Dorsolateral prefrontal cortex (tissue), 120 donors: ENCODE measurements at regions of chr9 and their contacts with region 1.

Region 1: GRCh38 chr9:34994260-34994899 is 4.8 kb downstream of the DNAJB5 start:
- DNase-seq: peak in 4 of 10 donors; percentile 49 to 67 (median 60)
- H3K4me3 ChIP-seq: peak overlapping the region in 10 of 59 donors; percentile 1 to 33 (median 8)
- H3K27ac ChIP-seq: peak overlapping the region in 58 of 59 donors; percentile 15 to 96 (median 82)
- H3K27me3 ChIP-seq: no peaks in the 10 kb centered on the region
- CTCF ChIP-seq: peak; percentile 8 to 75 (median 60)

Region 2: GRCh38 chr9:34701769-34702736 is 292.3 kb before region 1 on chr9:
- intact Hi-C with region 1: loop called in 1 of 2 experiments (anchors 5 kb)
- DNase-seq: peak; percentile 80 to 87 (median 84)
- H3K4me3 ChIP-seq: peak overlapping the region; percentile 53 to 92 (median 75)
- H3K27ac ChIP-seq: peak overlapping the region in 57 of 59 donors; percentile 49 to 91 (median 81)
- H3K27me3 ChIP-seq: no peaks in the 10 kb centered on the region
- CTCF ChIP-seq: peak; percentile 90 to 100 (median 98)

Region 3: DNA sequence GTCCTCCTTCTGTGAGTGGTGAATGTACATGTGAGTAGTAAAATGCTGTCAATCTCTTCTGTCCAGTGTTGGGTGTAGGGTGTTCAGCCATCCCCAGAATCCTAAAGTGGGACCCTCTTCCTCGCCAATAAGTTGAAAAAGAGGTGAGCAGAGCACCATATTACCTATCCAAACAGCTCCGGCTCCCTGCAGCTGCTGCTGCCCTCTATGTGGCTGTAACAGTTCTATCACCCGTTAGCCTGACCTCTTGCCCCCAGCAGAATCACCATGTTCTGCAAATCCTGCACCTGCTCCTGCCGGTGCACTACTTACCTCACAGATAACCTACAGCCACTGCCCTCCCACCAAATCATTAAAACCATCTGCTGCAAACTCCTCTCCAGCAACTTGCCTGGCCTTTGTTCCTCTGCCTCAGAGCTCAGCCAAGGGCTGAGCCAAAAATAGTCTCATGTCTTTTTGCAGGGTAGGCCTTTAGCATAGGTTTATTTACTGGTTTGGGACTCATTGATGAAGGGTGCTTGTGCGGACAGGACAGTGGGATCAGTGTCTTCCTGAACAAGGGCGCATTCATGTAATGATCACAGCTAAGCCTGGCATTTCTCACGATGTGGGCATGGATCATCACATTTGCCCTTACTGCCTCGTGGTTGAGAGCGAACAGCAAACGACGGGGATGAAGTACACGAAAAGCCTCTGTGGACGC is 234.8 kb before region 1 on chr9:
- intact Hi-C with region 1: loop called in 1 of 2 experiments (anchors 2 kb)
- DNase-seq: peak in 6 of 10 donors; percentile 30 to 65 (median 44)
- H3K4me3 ChIP-seq: peak overlapping the region in 2 of 59 donors; percentile 10 to 32
- H3K27ac ChIP-seq: peak overlapping the region in 24 of 59 donors; percentile 6 to 77 (median 47)
- H3K27me3 ChIP-seq: peaks cover 0 to 3% (median 0%) of the 10 kb centered on the region in 45 donors
- CTCF ChIP-seq: peak in 4 of 56 donors; percentile 7 to 12 (median 10)

Region 4: GRCh38 chr9:35071814-35072460 is 77.6 kb after region 1 on chr9:
- intact Hi-C with region 1: loop called (anchors 5 to 10 kb)
- DNase-seq: peak; percentile 54 to 84 (median 66)
- H3K4me3 ChIP-seq: peak overlapping the region; percentile 70 to 100 (median 93)
- H3K27ac ChIP-seq: peak overlapping the region; percentile 60 to 99 (median 97)
- H3K27me3 ChIP-seq: no peaks in the 10 kb centered on the region
- CTCF ChIP-seq: peak in 51 of 56 donors; percentile 9 to 70 (median 46)

Region 5: DNA sequence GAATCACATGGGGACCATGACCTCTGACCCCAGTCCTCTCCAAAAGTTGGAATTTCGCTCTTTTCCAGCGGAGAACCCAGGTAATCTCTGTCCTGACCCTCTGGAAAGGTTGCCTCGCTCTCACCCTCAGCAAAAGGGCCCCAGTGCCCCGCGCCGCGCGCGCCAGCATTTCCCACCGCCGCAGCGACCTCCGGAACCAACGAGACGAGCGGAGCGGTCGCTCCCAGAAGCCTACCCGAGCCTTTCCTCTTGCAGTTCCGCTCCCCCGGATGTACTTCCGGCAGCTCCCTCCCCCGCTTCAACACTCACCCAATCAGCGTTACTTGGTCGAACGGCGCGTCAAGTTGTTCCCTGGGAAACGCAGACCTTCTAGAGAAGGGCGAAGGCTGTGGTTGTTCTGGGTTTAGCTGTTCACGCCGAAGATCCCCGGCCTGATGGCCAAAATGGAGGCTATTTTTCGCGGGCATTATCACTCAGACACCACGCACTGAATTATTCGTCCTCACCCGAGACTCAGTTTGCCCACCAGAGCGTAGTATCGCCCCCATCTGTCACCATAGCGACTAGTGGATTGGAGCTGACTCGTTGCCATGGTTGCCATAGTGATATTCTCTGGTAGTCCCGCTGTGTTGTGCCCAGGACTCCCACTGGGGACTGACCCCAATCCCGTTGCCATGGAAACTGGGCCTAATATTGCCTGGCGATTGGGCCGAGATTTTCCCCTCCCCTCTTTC is 108.7 kb after region 1 on chr9 and contains the start of gene STOML2:
- intact Hi-C with region 1: loop called (anchors 5 kb)
- DNase-seq: peak; percentile 93 to 98 (median 96)
- H3K4me3 ChIP-seq: peak within 1 kb of the TSS; percentile 53 to 98 (median 83)
- H3K27ac ChIP-seq: peak within 1 kb of the TSS in 58 of 59 donors; percentile 50 to 97 (median 84)
- H3K27me3 ChIP-seq: no peaks in the 10 kb centered on the region
- CTCF ChIP-seq: peak in 40 of 56 donors; percentile 5 to 65 (median 38)
- total RNA-seq, gene STOML2: 36.9 to 78.5 (median 61.0) TPM